Right lobe of liver (tissue), 6 donors: ENCODE measurements at regions of chr6 and their contacts with region 1.

Region 1: DNA sequence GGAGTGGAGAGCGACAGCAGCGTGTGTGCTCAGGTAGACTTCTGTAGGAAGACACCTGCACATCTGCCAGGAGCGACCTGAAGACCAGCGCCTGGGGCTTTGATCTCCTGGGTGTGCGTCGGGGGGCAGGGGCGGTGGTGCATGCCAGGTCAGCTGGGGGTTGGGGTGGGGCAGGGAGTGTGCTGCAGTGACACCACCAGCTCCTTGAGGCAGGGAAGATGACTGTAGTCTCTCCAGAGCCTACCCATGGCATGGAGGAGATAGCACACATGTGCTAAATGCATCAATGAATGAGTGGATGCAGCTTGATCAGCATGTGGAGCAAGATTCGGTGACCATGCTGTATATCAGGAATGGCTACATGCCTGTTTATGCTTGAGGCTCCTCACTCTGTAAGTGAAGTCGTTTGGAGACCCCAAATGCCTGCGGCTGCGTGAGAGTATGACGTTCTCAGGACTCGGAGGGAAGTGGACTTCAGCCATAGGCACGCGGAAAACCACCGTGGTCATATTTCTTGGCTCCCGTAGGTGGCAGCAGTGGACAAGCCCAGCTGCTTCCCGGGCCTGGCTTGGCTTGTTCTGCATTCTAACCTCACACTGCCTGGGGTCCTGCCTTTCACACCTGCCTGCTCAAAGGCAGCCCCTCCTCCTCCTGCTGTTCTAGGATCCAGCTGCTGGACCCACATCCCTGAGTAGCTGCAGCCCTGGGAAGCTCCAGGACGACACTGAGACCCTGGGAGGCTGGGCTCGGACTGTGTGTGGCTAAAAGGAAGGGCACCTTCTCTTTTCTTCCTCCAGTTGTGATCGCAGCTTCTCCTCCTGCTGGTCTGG is 39.4 kb upstream of the KCNK16 start:
- DNase-seq: peak; percentile 64 to 69 (median 67)
- ATAC-seq: peak; percentile 88 to 95 (median 92)
- H3K4me3 ChIP-seq: no peak overlapping the region
- H3K27ac ChIP-seq: no peak overlapping the region
- H3K4me1 ChIP-seq: no peaks in the 10 kb centered on the region
- H3K27me3 ChIP-seq: no peaks in the 10 kb centered on the region
- CTCF ChIP-seq: peak; percentile 61 to 79 (median 76)
- POLR2A ChIP-seq: no peak

Region 2: GRCh38 chr6:39218873-39219536 is 142.9 kb before region 1 on chr6:
- intact Hi-C with region 1: no loop called
- DNase-seq: no peak
- ATAC-seq: no peak
- H3K4me3 ChIP-seq: no peak overlapping the region
- H3K27ac ChIP-seq: no peak overlapping the region
- H3K4me1 ChIP-seq: peaks cover 0 to 89% (median 21%) of the 10 kb centered on the region in 4 donors
- H3K27me3 ChIP-seq: no peaks in the 10 kb centered on the region
- CTCF ChIP-seq: peak in 1 of 4 donors; percentile 29
- POLR2A ChIP-seq: no peak

Region 3: DNA sequence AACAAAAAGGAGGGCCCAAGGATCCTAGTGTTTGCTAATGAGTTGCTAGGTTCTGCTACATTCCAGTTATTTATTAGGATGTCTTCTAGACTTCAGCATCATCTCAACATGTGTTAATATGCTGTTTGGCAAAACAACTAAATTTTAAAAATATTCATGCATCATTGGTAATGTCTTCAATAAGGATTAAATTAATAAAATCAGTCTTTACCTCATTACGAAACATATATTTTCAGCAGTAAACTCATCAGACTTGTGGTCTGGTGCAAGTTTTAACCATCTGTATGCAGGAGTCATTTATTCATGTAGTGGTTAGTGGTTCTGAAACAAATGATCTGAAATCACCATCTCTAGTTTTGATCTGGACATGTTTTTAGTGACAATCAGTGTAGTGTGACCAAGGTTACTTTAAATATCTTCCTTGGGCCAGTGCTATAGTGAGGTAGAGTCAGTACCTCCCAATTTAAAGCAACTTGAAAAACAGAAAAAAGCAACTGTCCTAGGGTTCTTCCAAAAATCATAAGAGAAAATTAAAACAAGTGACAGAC is 45.6 kb after region 1 on chr6:
- intact Hi-C with region 1: no loop called
- DNase-seq: no peak
- ATAC-seq: no peak
- H3K4me3 ChIP-seq: no peak overlapping the region
- H3K27ac ChIP-seq: no peak overlapping the region
- H3K4me1 ChIP-seq: peaks cover 0 to 16% (median 6%) of the 10 kb centered on the region in 4 donors
- H3K27me3 ChIP-seq: no peaks in the 10 kb centered on the region
- CTCF ChIP-seq: no peak
- POLR2A ChIP-seq: no peak

Region 4: GRCh38 chr6:39902786-39903465 is 541.1 kb after region 1 on chr6:
- intact Hi-C with region 1: loop called in 1 of 2 experiments (anchors 10 kb)
- DNase-seq: peak in 1 of 3 donors; percentile 41
- ATAC-seq: peak in 1 of 4 donors; percentile 4
- H3K4me3 ChIP-seq: no peak overlapping the region
- H3K27ac ChIP-seq: no peak overlapping the region
- H3K4me1 ChIP-seq: peaks cover 0 to 29% (median 8%) of the 10 kb centered on the region in 4 donors
- H3K27me3 ChIP-seq: no peaks in the 10 kb centered on the region
- CTCF ChIP-seq: peak in 2 of 4 donors; percentile 17 to 27
- POLR2A ChIP-seq: no peak

Region 5: DNA sequence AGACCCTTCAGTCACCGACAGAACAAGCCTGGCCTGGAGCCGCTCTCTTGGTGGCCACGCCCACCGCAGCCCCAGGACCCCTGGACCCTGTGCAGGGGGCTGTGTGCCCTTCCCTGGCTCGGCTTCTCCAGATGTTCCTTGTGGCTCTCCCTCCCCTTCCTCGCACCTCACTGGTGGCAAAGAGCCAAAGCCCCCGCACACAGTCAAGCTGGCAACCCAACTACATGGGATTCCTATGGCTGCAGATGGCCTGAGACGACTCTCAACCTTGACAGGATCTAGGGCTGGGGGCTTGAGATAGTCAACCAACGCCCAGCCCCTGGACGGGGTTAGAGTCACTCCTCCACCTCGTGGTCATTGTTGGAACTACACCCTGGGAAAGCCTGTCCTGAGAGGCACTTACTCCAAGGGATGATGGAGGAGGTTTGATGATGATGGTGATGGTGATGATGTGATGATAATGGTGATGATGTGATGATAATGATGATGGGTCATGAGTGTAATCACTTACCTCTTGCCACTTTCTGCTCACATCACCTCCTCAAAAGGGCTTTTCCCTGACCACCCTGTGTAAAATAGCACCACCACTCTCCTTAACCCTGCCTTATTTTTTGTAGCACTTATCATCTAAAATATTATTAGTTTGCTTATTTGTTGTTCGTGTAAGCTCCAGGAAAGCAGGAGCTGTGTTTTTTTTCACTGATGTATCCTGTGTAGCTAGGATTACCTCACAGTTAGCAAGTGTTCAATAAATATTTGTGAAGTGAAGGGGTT is 946.8 kb after region 1 on chr6:
- intact Hi-C with region 1: loop called in 1 of 2 experiments (anchors 10 kb)
- DNase-seq: peak in 2 of 3 donors; percentile 45 to 65
- ATAC-seq: peak; percentile 80 to 89 (median 84)
- H3K4me3 ChIP-seq: no peak overlapping the region
- H3K27ac ChIP-seq: no peak overlapping the region
- H3K4me1 ChIP-seq: no peaks in the 10 kb centered on the region
- H3K27me3 ChIP-seq: no peaks in the 10 kb centered on the region
- CTCF ChIP-seq: peak; percentile 86 to 94 (median 91)
- POLR2A ChIP-seq: no peak